GM12878 (cell line): ENCODE measurements at regions of chr10 and their contacts with region 1.

Region 1: DNA sequence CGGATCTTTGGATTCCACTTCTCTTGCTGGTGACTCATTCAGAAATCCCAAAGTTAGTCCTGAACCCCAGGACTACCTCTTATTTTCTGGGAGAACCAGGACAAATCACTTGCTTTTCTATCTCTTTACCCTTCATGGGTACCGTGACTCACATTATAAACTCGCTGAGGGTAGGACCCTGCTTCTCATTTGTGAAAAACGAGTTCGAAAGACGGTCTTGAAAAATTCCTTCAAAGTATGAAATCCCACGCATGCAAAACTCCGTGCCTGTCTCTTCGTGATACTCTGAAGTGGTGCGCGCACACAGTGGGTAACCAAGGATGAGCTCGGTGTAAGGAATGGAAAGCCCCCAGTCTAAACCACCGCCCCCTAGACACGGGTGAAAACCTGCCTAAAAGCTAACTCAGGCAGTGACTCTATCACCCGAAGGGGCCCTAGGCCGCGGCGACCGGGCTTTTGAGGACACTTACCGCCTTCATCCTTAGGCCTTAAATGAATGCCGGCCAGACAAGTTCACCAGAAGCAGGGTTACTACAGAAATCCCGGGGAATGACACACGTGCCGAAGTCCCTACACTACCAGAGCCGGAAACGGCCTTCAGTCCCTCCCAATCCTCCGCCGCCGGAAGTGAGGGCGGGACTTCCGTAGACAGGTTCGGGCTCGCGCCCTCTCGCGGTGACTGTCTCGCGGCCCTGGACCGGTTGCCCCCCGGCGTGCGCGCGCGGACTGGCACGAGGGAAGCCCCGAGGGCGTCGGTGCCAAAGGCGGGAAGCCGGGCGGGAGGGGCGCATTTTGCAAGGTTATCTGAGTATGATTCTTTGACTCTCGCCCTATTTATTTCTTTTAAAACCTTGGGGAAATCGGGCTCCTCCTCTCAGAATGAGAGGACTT is at the start of gene NOC3L:
- DNase-seq: peak; percentile 76
- ATAC-seq: peak; percentile 98
- H3K4me3 ChIP-seq: peak within 1 kb of the TSS; percentile 71
- H3K27ac ChIP-seq: peak within 1 kb of the TSS; percentile 85
- H3K4me1 ChIP-seq: peaks cover 4% of the 10 kb centered on the region; the same call in 1 of the 2 replicates
- H3K27me3 ChIP-seq: no peaks in the 10 kb centered on the region
- CTCF ChIP-seq: peak; percentile 63 to 87 (median 74); a peak in 5 of 6 replicates
- EP300 ChIP-seq: 0 out of 4 replicates have a peak, but pooled peaks of 1 of the 2 experiments have one; percentile 11
- POLR2A ChIP-seq: peak; percentile 87
- RAD21 ChIP-seq: 0 out of 2 replicates have a peak, but pooled peaks have one; percentile 21
- polyA plus RNA-seq, gene NOC3L: 37.7 to 38.2 TPM

Region 2: GRCh38 chr10:94288361-94289108 is 74.1 kb before region 1 on chr10:
- CTCF ChIA-PET with region 1: no interaction called
- POLR2A ChIA-PET with region 1: no interaction called
- RAD21 ChIA-PET with region 1: no interaction called
- SMC1A ChIA-PET with region 1: no interaction called
- in situ Hi-C with region 1: no loop called
- intact Hi-C with region 1: no loop called
- DNase-seq: no peak
- ATAC-seq: no peak
- H3K4me3 ChIP-seq: no peak overlapping the region
- H3K27ac ChIP-seq: no peak overlapping the region
- H3K4me1 ChIP-seq: no peaks in the 10 kb centered on the region
- H3K27me3 ChIP-seq: no peaks in the 10 kb centered on the region
- CTCF ChIP-seq: no peak
- EP300 ChIP-seq: no peak
- POLR2A ChIP-seq: no peak
- RAD21 ChIP-seq: no peak

Region 3: GRCh38 chr10:94344522-94345122 is 18.0 kb before region 1 on chr10:
- CTCF ChIA-PET with region 1: interaction called, 17 read pairs
- POLR2A ChIA-PET with region 1: interaction called, 15 read pairs
- RAD21 ChIA-PET with region 1: interaction called, 14 read pairs
- SMC1A ChIA-PET with region 1: interaction called, 10 read pairs
- in situ Hi-C with region 1: no loop called
- intact Hi-C with region 1: no loop called
- DNase-seq: peak; percentile 58
- ATAC-seq: peak; percentile 95
- H3K4me3 ChIP-seq: peak overlapping the region; percentile 16; the same call in 1 of the 2 replicates
- H3K27ac ChIP-seq: peak overlapping the region; percentile 73
- H3K4me1 ChIP-seq: peaks cover 9% of the 10 kb centered on the region
- H3K27me3 ChIP-seq: no peaks in the 10 kb centered on the region
- CTCF ChIP-seq: no peak
- EP300 ChIP-seq: peak in 1 of 2 experiments; percentile 68
- POLR2A ChIP-seq: no peak
- RAD21 ChIP-seq: no peak

Region 4: GRCh38 chr10:94459385-94459784 is 96.8 kb after region 1 on chr10:
- CTCF ChIA-PET with region 1: no interaction called
- POLR2A ChIA-PET with region 1: no interaction called
- RAD21 ChIA-PET with region 1: no interaction called
- SMC1A ChIA-PET with region 1: no interaction called
- in situ Hi-C with region 1: no loop called
- intact Hi-C with region 1: no loop called
- DNase-seq: no peak
- ATAC-seq: no peak
- H3K4me3 ChIP-seq: no peak overlapping the region
- H3K27ac ChIP-seq: no peak overlapping the region
- H3K4me1 ChIP-seq: no peaks in the 10 kb centered on the region
- H3K27me3 ChIP-seq: no peaks in the 10 kb centered on the region
- CTCF ChIP-seq: no peak
- EP300 ChIP-seq: no peak
- POLR2A ChIP-seq: no peak
- RAD21 ChIP-seq: no peak

Region 5: DNA sequence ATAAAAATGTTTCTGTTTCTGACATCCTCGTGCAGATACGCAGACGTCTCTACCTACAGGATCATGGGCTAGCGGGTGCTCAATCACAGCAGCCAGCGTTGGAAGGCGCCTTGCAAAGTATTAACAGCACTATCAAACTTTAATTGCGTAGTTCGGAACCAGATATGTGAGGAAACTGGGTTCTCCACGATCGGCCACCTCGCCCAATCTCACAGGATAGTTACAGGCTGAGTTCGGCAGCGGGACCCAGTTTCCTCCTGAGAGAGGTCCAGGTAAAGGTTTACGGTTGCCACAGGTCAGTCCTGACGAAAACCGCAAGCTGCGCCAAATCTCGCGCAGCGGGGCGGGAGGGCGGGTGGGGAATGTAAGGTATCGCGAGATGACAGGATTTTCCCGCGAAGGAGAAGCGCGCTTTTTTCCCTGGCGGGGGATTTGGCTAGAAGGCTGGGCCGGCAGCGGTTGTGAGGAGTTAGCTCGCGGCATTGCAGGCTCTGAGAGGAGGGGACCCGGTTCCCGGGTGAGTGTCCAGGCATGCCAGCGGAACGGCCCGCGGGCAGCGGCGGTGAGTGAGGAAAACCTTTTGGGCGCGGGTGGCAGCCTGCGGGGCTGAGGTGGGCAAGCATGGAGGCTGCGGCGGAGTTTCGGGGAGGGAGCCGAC is 182.9 kb after region 1 on chr10 and contains the start of gene HELLS:
- CTCF ChIA-PET with region 1: no interaction called
- POLR2A ChIA-PET with region 1: interaction called, 4 read pairs
- RAD21 ChIA-PET with region 1: no interaction called
- SMC1A ChIA-PET with region 1: no interaction called
- in situ Hi-C with region 1: no loop called
- intact Hi-C with region 1: loop called (anchors 10 kb)
- DNase-seq: peak; percentile 66
- ATAC-seq: peak; percentile 82
- H3K4me3 ChIP-seq: peak within 1 kb of the TSS; percentile 85
- H3K27ac ChIP-seq: peak within 1 kb of the TSS; percentile 92
- H3K4me1 ChIP-seq: peaks cover 5% of the 10 kb centered on the region
- H3K27me3 ChIP-seq: no peaks in the 10 kb centered on the region
- CTCF ChIP-seq: no peak
- EP300 ChIP-seq: no peak
- POLR2A ChIP-seq: peak; percentile 87
- RAD21 ChIP-seq: no peak
- polyA plus RNA-seq, gene HELLS: 33.9 to 46.6 TPM